Right lobe of liver (tissue), 6 donors: ENCODE measurements at regions of chr17 and their contacts with region 1.

Region 1: GRCh38 chr17:66567234-66568170 is 265.1 kb downstream of the PRKCA start:
- DNase-seq: peak; percentile 79 to 90 (median 85)
- ATAC-seq: peak; percentile 96 to 99 (median 98)
- H3K4me3 ChIP-seq: no peak overlapping the region
- H3K27ac ChIP-seq: peak overlapping the region in 1 of 3 donors; percentile 2
- H3K4me1 ChIP-seq: no peaks in the 10 kb centered on the region
- H3K27me3 ChIP-seq: no peaks in the 10 kb centered on the region
- CTCF ChIP-seq: peak; percentile 81 to 89 (median 88)
- POLR2A ChIP-seq: no peak

Region 2: GRCh38 chr17:66268247-66268927 is 299.1 kb before region 1 on chr17:
- intact Hi-C with region 1: loop called in 1 of 2 experiments (anchors 10 kb)
- DNase-seq: no peak
- ATAC-seq: no peak
- H3K4me3 ChIP-seq: no peak overlapping the region
- H3K27ac ChIP-seq: no peak overlapping the region
- H3K4me1 ChIP-seq: no peaks in the 10 kb centered on the region
- H3K27me3 ChIP-seq: no peaks in the 10 kb centered on the region
- CTCF ChIP-seq: no peak
- POLR2A ChIP-seq: no peak

Region 3: DNA sequence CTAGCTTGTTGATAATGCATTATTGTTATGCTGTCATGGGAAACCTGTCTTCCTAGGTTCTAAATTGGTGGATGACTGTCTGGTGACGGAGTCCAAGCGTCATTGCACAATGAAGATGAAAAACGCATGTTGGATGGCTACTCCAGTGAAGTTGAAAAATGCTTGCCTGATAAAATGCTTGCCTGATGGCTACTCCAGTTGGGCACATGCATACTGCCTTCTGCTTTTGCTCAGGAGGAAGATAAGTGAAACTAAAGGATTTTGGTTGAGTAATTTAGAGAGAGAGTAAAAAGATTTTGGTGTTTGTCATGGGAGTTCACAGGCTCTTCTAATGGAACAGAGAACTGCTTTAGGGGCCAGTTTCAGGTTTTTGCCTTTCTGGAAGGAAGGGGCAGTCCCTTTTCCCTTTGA is 146.5 kb before region 1 on chr17:
- intact Hi-C with region 1: no loop called
- DNase-seq: no peak
- ATAC-seq: peak in 3 of 4 donors; percentile 16 to 55 (median 24)
- H3K4me3 ChIP-seq: no peak overlapping the region
- H3K27ac ChIP-seq: no peak overlapping the region
- H3K4me1 ChIP-seq: peaks cover 0 to 37% (median 9%) of the 10 kb centered on the region in 4 donors
- H3K27me3 ChIP-seq: no peaks in the 10 kb centered on the region
- CTCF ChIP-seq: no peak
- POLR2A ChIP-seq: no peak

Region 4: DNA sequence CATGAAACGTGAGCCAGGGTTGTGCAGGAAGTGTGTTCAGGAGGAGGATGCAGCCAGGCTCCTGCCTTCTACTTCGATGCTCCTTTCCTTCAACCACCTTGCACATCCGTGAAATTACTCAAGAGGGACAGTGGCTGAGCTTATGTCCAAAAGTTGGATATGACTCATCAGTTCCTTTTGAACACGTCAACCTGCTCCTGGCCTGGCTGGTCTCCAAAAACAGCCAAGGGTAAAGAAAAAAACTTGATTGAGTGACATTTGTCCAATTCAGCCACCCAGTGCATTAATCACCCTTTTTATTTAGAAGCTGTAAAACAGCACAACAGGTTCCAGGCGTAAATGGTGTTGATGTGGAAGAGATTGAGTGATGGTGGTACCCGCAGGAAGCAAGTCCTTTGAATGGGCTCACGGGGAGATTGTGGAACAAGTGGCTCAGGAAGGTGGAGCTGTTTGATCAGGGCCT is 93.9 kb after region 1 on chr17:
- intact Hi-C with region 1: no loop called
- DNase-seq: peak in 1 of 3 donors; percentile 58
- ATAC-seq: peak; percentile 21 to 82 (median 51)
- H3K4me3 ChIP-seq: no peak overlapping the region
- H3K27ac ChIP-seq: no peak overlapping the region
- H3K4me1 ChIP-seq: no peaks in the 10 kb centered on the region
- H3K27me3 ChIP-seq: no peaks in the 10 kb centered on the region
- CTCF ChIP-seq: no peak
- POLR2A ChIP-seq: no peak

Region 5: DNA sequence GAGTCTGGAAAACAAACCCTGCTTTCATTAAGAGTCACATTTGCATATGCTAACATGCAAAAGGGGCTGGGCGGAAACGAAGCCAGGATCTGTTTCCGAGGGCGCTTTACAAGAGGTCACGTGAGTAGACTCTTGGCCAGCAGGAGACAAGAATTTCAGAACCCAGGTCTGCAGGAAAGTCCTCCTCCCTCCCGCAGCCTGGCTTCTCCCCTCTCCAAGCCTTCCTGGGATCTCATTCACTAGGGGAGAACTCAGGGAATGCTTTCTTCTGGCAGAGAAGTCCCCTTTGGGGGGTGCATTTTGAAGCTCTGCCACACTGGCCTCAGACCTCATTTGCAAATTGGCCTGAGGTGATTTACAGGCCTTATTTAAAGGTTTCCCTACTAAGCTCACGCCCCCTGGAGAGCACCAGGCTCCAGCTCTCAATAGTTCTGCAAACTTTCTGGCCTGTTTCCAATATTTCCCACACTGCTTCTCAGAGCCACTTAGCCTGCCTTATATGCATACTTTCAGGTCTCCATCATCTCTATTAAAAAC is 210.3 kb after region 1 on chr17:
- intact Hi-C with region 1: no loop called
- DNase-seq: no peak
- ATAC-seq: no peak
- H3K4me3 ChIP-seq: no peak overlapping the region
- H3K27ac ChIP-seq: no peak overlapping the region
- H3K4me1 ChIP-seq: no peaks in the 10 kb centered on the region
- H3K27me3 ChIP-seq: no peaks in the 10 kb centered on the region
- CTCF ChIP-seq: no peak
- POLR2A ChIP-seq: no peak